Heart left ventricle (tissue), 16 donors: ENCODE measurements at regions of chr16 and their contacts with region 1.

Region 1: GRCh38 chr16:4123616-4124265 is 7.5 kb upstream of the ADCY9 start:
- DNase-seq: peak in 1 of 5 donors; percentile 0
- ATAC-seq: no peak
- H3K4me3 ChIP-seq: no peak overlapping the region
- H3K27ac ChIP-seq: no peak overlapping the region
- H3K4me1 ChIP-seq: no peaks in the 10 kb centered on the region
- H3K27me3 ChIP-seq: no peaks in the 10 kb centered on the region
- CTCF ChIP-seq: no peak
- POLR2A ChIP-seq: no peak

Region 2: DNA sequence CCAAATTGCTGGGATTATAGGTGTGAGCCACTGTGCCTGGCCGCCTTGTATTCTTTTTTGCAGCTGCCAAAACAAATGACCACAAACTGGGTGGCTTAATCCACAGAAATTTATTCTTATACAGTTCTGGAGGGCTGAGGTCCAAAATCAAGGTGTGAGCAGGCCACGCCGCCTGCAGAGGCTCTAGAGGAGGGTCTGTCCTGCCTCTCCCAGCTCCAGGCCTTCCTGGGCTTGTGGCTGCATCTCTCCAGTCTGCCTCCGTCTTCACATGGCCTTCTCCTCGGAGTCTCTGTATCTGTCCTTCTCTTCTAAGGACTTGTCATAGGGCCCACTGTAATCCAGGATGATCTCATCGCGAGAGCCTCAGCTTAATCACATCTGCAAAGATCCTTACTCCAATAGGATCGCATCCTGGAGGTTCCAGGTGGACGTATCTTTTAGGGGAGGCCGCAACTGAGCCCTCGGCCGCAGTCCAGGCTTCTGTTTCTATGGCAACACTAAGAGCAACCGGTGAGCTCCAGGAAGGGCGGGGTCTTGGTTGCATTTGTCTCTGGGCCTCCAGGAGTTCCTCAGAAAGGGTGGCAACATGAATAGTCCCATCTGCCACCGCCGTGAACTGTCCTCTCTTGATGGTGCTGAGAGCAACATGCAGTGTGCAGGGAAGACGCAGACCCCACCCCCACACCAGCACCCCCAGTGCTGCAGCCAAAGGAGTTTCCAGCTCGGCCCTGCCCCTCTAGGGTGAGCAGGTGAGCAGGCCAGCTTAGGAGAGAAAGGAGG is 213.8 kb before region 1 on chr16:
- intact Hi-C with region 1: no loop called
- DNase-seq: no peak
- ATAC-seq: no peak
- H3K4me3 ChIP-seq: no peak overlapping the region
- H3K27ac ChIP-seq: no peak overlapping the region
- H3K4me1 ChIP-seq: no peaks in the 10 kb centered on the region
- H3K27me3 ChIP-seq: no peaks in the 10 kb centered on the region
- CTCF ChIP-seq: no peak
- POLR2A ChIP-seq: no peak

Region 3: DNA sequence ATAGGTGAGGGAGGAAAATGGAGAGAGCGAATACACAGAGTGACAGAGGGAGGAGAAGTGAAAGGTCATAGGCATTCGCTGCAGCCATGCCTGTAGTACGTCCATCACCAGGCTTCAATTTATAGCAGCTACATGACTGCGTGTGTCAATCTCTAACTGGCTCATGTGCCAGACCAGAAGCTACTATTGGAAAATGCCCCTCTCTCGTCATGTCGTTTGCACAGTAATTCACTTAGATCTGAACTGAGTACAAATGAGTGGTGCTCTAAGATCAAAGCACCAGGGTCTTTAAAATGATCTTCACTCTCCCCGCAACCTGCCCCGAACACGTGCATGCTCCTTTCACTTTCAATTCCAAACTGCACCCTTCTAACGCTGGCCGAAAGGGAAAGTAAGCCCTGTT is 58.8 kb before region 1 on chr16:
- intact Hi-C with region 1: no loop called
- DNase-seq: no peak
- ATAC-seq: peak in 3 of 4 donors; percentile 47 to 67 (median 54)
- H3K4me3 ChIP-seq: peak overlapping the region in 8 of 12 donors; percentile 5 to 29 (median 20)
- H3K27ac ChIP-seq: peak overlapping the region in 3 of 12 donors; percentile 6 to 20 (median 12)
- H3K4me1 ChIP-seq: peaks cover 0 to 11% (median 1%) of the 10 kb centered on the region in 12 donors
- H3K27me3 ChIP-seq: no peaks in the 10 kb centered on the region
- CTCF ChIP-seq: no peak
- POLR2A ChIP-seq: no peak

Region 4: DNA sequence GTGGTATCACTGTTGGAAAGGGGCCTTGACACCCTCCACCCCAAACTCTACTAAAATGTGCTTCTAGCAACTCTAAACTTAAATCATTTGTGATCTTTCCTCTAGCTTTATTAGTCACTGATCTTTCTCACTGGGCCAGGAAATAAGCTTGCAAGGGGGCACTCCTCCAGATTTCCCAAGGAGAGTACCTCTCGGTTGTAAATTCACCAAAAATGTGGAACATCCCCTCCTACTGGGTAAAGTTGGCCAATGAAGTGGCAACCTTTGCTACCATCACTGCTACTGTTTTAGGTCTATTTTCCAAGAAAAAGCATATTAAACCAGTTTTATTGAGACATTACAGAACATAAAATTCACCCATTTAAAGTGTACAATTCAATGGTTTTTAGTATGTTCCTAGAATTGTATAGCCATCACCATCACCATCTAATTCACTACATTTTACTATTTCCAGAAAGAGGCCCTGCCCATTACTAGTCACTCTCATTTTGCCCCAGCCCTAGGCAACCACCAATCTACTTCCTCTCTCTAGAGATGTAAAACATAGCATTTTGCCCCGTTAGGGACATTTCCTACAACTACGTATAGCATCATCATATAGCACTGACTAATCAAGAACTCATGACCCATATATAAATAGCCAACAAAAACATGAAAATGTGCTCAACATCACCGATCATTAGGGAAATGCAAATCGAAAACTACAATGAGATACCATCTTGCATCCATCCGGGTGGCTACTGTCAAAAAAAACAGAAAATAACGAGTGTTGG is 37.1 kb after region 1 on chr16:
- intact Hi-C with region 1: no loop called
- DNase-seq: no peak
- ATAC-seq: no peak
- H3K4me3 ChIP-seq: no peak overlapping the region
- H3K27ac ChIP-seq: no peak overlapping the region
- H3K4me1 ChIP-seq: no peaks in the 10 kb centered on the region
- H3K27me3 ChIP-seq: no peaks in the 10 kb centered on the region
- CTCF ChIP-seq: no peak
- POLR2A ChIP-seq: no peak

Region 5: DNA sequence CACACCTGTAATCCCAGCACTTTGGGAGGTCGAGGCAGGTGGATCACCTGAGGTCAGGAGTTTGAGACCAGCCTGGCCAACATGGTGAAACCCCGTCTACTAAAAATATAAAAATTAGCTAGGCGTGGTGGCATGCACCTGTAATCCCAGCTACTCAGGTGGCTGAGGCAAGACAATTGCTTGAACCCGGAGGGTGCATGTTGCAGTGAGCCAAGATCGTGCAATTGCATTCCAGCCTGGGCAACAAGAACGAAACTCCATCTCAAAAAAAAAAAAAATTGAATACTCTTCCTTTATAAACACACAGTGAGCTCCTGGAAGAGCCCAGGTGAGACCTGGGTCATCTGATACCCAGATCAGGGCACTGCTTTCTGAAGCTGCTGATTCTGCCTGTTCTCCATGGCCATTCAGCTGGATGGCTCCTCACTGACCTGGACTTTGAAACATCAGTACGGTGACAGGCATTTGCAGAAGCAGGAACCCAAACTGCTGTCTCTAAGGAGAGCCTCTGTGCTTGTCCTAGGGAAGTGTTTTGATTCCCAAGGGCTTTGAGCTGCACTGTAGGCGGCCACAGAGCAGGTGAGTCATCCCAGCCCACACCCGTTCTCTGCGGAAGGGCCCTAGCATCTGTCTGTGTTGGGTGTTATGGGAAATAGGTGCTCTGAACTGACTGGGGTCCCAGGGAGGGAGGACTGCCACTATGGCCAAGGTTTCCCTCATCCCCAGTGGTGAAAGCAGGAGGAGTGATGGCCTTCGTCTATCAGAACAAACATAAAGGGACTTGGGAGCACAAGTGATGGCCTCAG is 53.1 kb after region 1 on chr16:
- intact Hi-C with region 1: loop called in 7 of 10 experiments (anchors 5 to 10 kb)
- DNase-seq: no peak
- ATAC-seq: no peak
- H3K4me3 ChIP-seq: no peak overlapping the region
- H3K27ac ChIP-seq: no peak overlapping the region
- H3K4me1 ChIP-seq: no peaks in the 10 kb centered on the region
- H3K27me3 ChIP-seq: peaks cover 0 to 4% (median 0%) of the 10 kb centered on the region in 9 donors
- CTCF ChIP-seq: no peak
- POLR2A ChIP-seq: no peak

Region 6: DNA sequence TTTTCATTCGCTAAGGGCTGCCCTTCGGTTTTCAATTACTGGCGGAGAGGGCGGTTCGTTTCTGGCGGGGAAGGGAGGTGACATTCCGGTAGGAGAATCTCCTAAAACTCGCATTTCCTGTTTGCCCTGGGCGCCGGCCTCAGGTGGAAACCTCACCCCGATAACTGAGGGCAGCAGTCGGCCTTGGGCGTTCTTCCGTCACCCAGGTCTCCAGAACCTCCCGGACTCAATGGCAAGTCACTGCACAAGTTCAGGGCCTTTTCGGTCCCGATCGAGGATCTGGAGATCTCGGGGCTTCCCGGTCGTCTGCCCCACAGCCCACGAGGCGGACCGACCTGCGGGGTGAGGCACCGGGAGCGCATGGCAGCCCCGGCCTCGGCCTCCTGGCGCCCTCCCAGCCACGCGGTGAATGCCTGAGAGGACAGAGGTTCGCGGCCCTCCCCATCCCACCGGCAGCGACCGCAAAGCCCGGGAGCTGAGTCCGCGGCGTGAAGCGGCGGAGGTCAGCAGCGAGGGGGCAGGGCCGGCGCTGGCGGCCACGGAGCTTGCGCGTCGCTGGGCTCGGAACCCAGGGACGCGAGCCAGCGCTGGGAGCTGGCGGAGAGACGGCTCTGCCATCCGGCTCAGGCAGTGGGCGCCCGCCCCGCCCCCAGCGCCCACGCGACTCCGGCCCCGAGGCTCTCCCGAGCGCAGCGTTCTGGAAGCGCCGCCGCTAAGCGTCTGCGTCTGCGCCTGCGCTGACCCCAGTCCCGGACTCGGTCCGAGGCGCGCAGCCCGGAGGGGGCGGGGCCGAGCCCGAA is 59.7 kb after region 1 on chr16:
- intact Hi-C with region 1: loop called in 7 of 10 experiments (anchors 5 to 10 kb)
- DNase-seq: peak; percentile 93 to 98 (median 94)
- ATAC-seq: peak; percentile 79 to 96 (median 96)
- H3K4me3 ChIP-seq: peak overlapping the region; percentile 43 to 90 (median 76)
- H3K27ac ChIP-seq: peak overlapping the region; percentile 89 to 99 (median 96)
- H3K4me1 ChIP-seq: peaks cover 0 to 17% (median 7%) of the 10 kb centered on the region in 12 donors
- H3K27me3 ChIP-seq: peaks cover 0 to 12% (median 0%) of the 10 kb centered on the region in 9 donors
- CTCF ChIP-seq: peak in 5 of 12 donors; percentile 14 to 51 (median 43)
- POLR2A ChIP-seq: peak in 1 of 2 donors; percentile 83

Region 7: GRCh38 chr16:4244254-4245076 is 120.7 kb after region 1 on chr16:
- intact Hi-C with region 1: loop called in 2 of 10 experiments (anchors 10 kb)
- DNase-seq: no peak
- ATAC-seq: no peak
- H3K4me3 ChIP-seq: no peak overlapping the region
- H3K27ac ChIP-seq: no peak overlapping the region
- H3K4me1 ChIP-seq: peaks cover 0 to 16% (median 4%) of the 10 kb centered on the region in 12 donors
- H3K27me3 ChIP-seq: no peaks in the 10 kb centered on the region
- CTCF ChIP-seq: no peak
- POLR2A ChIP-seq: no peak

Region 8: GRCh38 chr16:4425378-4426020 is 301.8 kb after region 1 on chr16 and contains the start of gene DNAJA3:
- intact Hi-C with region 1: no loop called
- DNase-seq: peak; percentile 90 to 96 (median 92)
- ATAC-seq: peak; percentile 95 to 99 (median 98)
- H3K4me3 ChIP-seq: peak within 1 kb of the TSS; percentile 64 to 99 (median 82)
- H3K27ac ChIP-seq: peak within 1 kb of the TSS; percentile 90 to 99 (median 96)
- H3K4me1 ChIP-seq: peaks cover 0 to 42% (median 16%) of the 10 kb centered on the region in 12 donors
- H3K27me3 ChIP-seq: no peaks in the 10 kb centered on the region
- CTCF ChIP-seq: peak in 2 of 12 donors; percentile 7 to 13
- POLR2A ChIP-seq: peak; percentile 24 to 85
- total RNA-seq, gene DNAJA3: 47.5 to 88.4 (median 59.7) TPM